ENCODE measurements at regions of chr16 and their contacts with region 1.

Region 1: GRCh38 chr16:1533443-1533951 is at the start of gene TMEM204:
- DNase-seq: peak; percentile 42 to 62 (median 58)
- H3K4me3 ChIP-seq: peak within 1 kb of the TSS; percentile 82 to 96
- H3K4me3 Mint-ChIP-seq: peak within 1 kb of the TSS; percentile 94 to 100 (median 98)
- H3K27ac ChIP-seq: peak within 1 kb of the TSS; percentile 73
- H3K27ac Mint-ChIP-seq: peak within 1 kb of the TSS; percentile 65 to 96 (median 93)
- H3K4me1 ChIP-seq: peaks cover 42% of the 10 kb centered on the region
- H3K4me1 Mint-ChIP-seq: peaks cover 24 to 53% (median 38%) of the 10 kb centered on the region in 4 donors
- H3K27me3 ChIP-seq: no peaks in the 10 kb centered on the region
- H3K27me3 Mint-ChIP-seq: no peaks in the 10 kb centered on the region
- total RNA-seq, gene TMEM204: 124 to 125 TPM

Region 2: DNA sequence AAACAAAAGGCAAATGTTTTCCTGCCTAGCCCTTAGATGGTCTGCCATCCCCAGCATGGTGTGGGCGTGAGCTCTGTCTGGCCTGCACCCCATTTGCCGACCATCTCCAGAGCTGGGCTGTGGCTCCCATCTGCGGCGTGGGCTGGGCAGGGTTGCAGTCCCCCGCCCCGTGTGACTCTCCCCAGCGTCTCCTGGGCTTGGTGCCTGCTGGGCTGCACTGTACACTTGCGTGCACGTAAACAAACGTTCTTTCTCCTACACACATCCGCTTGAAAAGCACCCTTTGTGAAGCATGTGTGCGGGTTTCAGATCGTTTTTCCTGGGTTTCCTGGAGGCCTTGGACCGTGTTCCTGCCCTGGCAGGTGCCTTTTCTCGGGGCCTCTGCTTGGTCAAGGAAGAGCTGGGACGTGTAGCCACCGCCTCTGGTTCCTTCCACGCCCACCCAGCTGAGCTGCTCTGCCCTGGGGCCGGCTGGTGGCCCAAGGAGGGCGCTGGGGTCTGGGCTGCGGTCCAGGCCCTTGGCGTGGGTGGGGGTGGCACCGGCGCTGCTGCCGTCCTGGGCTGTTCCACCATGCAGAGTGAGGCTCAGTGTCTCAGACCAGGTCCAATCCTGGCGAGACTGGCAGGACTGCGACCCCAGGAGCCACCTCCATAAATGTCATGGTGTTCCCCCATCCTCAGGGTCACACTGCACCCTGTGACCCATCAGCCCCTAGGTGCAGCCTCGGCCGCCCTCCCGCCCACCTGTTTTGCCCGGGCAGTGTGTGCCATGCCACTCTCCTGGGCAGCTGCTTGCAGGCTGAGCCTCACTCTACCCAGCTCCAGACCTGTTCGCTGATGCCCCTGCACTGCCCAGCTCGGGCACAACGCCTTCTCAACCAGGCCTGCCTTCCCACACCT is 210.0 kb before region 1 on chr16:
- CTCF ChIA-PET with region 1: no interaction called
- POLR2A ChIA-PET with region 1: no interaction called
- intact Hi-C with region 1: no loop called
- DNase-seq: no peak
- H3K4me3 ChIP-seq: no peak overlapping the region
- H3K4me3 Mint-ChIP-seq: no peak overlapping the region
- H3K27ac ChIP-seq: no peak overlapping the region
- H3K27ac Mint-ChIP-seq: no peak overlapping the region
- H3K4me1 ChIP-seq: no peaks in the 10 kb centered on the region
- H3K4me1 Mint-ChIP-seq: peaks cover 0 to 3% (median 3%) of the 10 kb centered on the region in 4 donors
- H3K27me3 ChIP-seq: no peaks in the 10 kb centered on the region
- H3K27me3 Mint-ChIP-seq: no peaks in the 10 kb centered on the region

Region 3: GRCh38 chr16:1474796-1475551 is 58.5 kb before region 1 on chr16 and contains the start of gene CLCN7:
- CTCF ChIA-PET with region 1: no interaction called
- POLR2A ChIA-PET with region 1: interaction called, 4 read pairs
- intact Hi-C with region 1: loop called (anchors 2 kb)
- DNase-seq: peak; percentile 83 to 87 (median 85)
- H3K4me3 ChIP-seq: peak within 1 kb of the TSS; percentile 49 to 74
- H3K4me3 Mint-ChIP-seq: peak within 1 kb of the TSS; percentile 80 to 91 (median 84)
- H3K27ac ChIP-seq: peak within 1 kb of the TSS; percentile 91
- H3K27ac Mint-ChIP-seq: peak within 1 kb of the TSS; percentile 85 to 93 (median 91)
- H3K4me1 ChIP-seq: peaks cover 25% of the 10 kb centered on the region
- H3K4me1 Mint-ChIP-seq: peaks cover 8 to 46% (median 30%) of the 10 kb centered on the region in 4 donors
- H3K27me3 ChIP-seq: no peaks in the 10 kb centered on the region
- H3K27me3 Mint-ChIP-seq: peaks cover 0 to 3% of the 10 kb centered on the region in 2 donors
- total RNA-seq, gene CLCN7: 105 to 111 TPM

Region 4: DNA sequence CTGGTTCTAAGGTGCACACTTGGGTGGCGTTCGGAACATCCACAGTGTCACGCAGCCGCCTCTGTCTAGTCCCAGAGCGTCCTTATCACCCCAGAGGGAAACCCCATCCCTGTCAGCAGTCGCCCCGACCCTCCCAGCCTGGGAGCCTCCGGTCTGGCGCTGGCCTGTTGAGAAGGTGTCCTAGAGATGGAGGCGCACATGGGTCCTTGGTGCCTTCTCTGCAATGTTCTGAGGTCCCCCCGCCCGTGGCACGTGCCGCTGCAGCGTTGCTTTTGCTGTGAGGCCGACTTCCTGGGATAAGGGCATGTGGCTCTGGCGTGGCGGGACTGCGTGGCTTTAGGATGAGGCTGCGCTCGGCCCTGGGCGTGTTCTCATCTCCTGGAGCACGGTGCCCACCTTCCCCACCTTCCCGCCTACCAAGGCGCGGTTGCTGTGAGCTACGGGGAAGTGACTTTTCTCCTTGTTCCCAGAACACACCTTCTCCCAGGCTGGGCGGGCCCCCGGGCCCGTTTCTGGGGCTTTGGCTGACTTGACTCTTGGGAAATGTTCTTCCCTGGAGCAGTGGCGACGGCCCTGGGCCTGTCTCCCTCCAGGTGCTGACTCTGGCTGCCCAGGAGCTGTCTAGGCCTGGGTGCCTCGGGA is 28.6 kb before region 1 on chr16:
- CTCF ChIA-PET with region 1: no interaction called
- POLR2A ChIA-PET with region 1: no interaction called
- intact Hi-C with region 1: no loop called
- DNase-seq: no peak
- H3K4me3 ChIP-seq: no peak overlapping the region
- H3K4me3 Mint-ChIP-seq: no peak overlapping the region
- H3K27ac ChIP-seq: no peak overlapping the region
- H3K27ac Mint-ChIP-seq: no peak overlapping the region
- H3K4me1 ChIP-seq: no peaks in the 10 kb centered on the region
- H3K4me1 Mint-ChIP-seq: peaks cover 0 to 2% (median 0%) of the 10 kb centered on the region in 4 donors
- H3K27me3 ChIP-seq: no peaks in the 10 kb centered on the region
- H3K27me3 Mint-ChIP-seq: no peaks in the 10 kb centered on the region

Region 5: GRCh38 chr16:1556254-1556653 is 22.8 kb after region 1 on chr16:
- CTCF ChIA-PET with region 1: interaction called, 4 read pairs
- POLR2A ChIA-PET with region 1: interaction called, 12 read pairs
- intact Hi-C with region 1: no loop called
- DNase-seq: no peak
- H3K4me3 ChIP-seq: no peak overlapping the region
- H3K4me3 Mint-ChIP-seq: no peak overlapping the region
- H3K27ac ChIP-seq: no peak overlapping the region
- H3K27ac Mint-ChIP-seq: peak overlapping the region in 1 of 7 donors; percentile 53
- H3K4me1 ChIP-seq: peaks cover 29% of the 10 kb centered on the region
- H3K4me1 Mint-ChIP-seq: peaks cover 23 to 49% (median 38%) of the 10 kb centered on the region in 4 donors
- H3K27me3 ChIP-seq: no peaks in the 10 kb centered on the region
- H3K27me3 Mint-ChIP-seq: no peaks in the 10 kb centered on the region

Measured in CD4-positive, alpha-beta memory T cell (primary cell).